ENCODE measurements at regions of chr15 and their contacts with region 1.

Region 1: DNA sequence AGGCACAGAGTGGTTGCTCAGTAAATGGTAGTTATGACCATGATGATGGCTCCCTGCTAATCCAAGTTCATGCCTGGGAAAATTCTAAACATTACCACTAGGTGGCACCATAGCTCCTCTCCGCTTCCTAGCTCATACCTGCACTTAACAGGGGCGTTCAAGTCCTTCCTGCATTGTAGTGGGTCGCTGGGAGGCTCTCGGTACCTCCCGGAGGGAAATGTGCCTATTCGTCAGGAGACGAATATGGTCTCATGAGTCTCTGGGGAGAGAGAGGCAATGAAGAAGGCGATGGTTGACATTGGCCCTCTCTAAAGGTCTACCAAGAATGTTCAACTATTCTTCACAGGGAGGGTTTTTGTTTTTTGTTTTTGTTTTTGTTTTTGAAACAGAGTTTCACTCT is 10.9 kb downstream of the MESP1 start:
- DNase-seq: peak; percentile 62 to 73
- H3K4me3 ChIP-seq: no peak overlapping the region
- H3K27ac ChIP-seq: no peak overlapping the region
- H3K4me1 ChIP-seq: no peaks in the 10 kb centered on the region
- H3K27me3 ChIP-seq: peaks cover 0 to 2% (median under 1%) of the 10 kb centered on the region in 4 experiments; a peak in 5 of 7 replicates
- CTCF ChIP-seq: peak; percentile 29 to 92 (median 83)
- EP300 ChIP-seq: no peak
- POLR2A ChIP-seq: no peak
- RAD21 ChIP-seq: peak; percentile 92 to 95

Region 2: GRCh38 chr15:89728254-89728653 is 11.9 kb before region 1 on chr15:
- CTCF ChIA-PET with region 1: interaction called, 30 read pairs
- POLR2A ChIA-PET with region 1: no interaction called
- DNase-seq: no peak
- H3K4me3 ChIP-seq: no peak overlapping the region
- H3K27ac ChIP-seq: no peak overlapping the region
- H3K4me1 ChIP-seq: no peaks in the 10 kb centered on the region; a peak in 2 of 7 replicates
- H3K27me3 ChIP-seq: no peaks in the 10 kb centered on the region; a peak in 1 of 7 replicates
- CTCF ChIP-seq: no peak
- EP300 ChIP-seq: no peak
- POLR2A ChIP-seq: no peak
- RAD21 ChIP-seq: no peak